HepG2 (cell line): ENCODE measurements at regions of chr17 and their contacts with region 1.

Region 1: DNA sequence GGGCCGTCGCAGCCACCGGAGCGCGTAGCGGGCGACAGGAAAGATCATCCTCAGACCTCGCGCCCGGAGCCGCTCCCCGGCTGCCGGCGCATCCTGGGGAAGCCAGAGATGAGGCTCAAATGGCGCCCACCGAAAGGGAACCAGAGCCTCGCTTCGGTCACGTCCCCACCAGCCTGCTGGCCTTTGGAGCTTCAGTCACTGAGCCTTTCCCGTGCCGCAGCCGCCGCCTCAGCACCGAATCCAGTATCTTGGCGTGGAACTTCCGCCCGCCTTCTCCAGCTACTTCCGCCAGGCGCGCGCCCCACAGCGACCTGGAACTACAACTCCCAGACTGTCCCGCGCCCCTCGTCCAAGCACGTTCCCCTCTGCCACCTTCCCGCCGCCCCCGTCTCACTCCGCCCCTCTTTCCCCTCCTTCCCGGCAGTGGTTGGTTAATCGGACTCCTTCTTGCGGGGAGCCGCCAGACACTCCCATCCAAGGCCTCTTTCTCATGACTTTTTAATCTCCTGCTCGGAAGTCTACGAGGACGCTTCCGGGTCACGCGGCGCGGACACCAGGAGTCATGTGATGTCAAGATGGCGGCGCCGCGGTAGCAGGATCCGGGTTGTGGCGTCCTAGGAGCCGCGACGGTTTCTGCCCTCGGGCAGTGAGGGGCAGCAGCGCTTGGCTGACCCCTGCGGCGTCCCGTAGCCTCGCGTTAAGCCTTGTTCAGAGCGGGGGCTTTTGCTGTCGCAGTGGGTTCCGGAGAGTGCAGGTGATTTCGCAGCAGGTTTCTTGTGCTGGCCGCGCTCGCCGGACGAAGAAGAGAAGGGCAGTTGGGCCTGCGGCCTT is at the starts of genes SMCR8 and TOP3A:
- DNase-seq: peak; percentile 92
- ATAC-seq: peak; percentile 94
- H3K4me3 ChIP-seq: peak within 1 kb of the TSS; percentile 71 to 91 (median 80)
- H3K27ac ChIP-seq: peak within 1 kb of the TSS; percentile 88
- H3K4me1 ChIP-seq: peaks cover 64% of the 10 kb centered on the region
- H3K27me3 ChIP-seq: no peaks in the 10 kb centered on the region; a peak in 1 of 5 replicates
- CTCF ChIP-seq: no peak
- EP300 ChIP-seq: no peak
- POLR2A ChIP-seq: peak; percentile 67 to 90
- RAD21 ChIP-seq: peak; percentile 54
- total RNA-seq, gene SMCR8: 11.8 and 16.6 TPM in 2 replicates
- total RNA-seq, gene TOP3A: 30.7 and 36.8 TPM in 2 replicates

Region 2: DNA sequence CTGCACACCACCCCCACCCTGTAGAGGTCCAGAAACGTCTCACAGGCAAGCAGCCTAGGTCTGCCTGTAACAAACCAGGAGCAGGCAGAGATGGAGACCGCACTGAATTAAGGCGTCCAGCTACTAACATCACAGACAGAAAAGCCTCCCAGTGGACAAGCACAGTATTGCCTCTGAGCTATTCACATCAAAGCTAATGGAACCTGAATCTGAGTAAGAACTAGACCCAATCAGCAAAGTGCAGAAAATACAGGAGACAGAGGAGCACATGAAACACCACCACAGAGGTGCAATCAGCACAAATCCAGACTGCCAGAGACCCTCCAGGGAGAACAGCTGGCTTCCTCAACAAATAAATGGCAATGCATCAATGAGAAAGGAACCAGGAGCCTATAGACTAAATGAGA is 701.2 kb before region 1 on chr17:
- CTCF ChIA-PET with region 1: no interaction called
- POLR2A ChIA-PET with region 1: no interaction called
- in situ Hi-C with region 1: no loop called
- intact Hi-C with region 1: no loop called
- DNase-seq: peak; percentile 63
- ATAC-seq: peak; percentile 93
- H3K4me3 ChIP-seq: no peak overlapping the region
- H3K27ac ChIP-seq: no peak overlapping the region
- H3K4me1 ChIP-seq: peaks cover 18% of the 10 kb centered on the region
- H3K27me3 ChIP-seq: no peaks in the 10 kb centered on the region
- CTCF ChIP-seq: peak; percentile 79
- EP300 ChIP-seq: no peak
- POLR2A ChIP-seq: no peak
- RAD21 ChIP-seq: peak; percentile 51

Region 3: GRCh38 chr17:18257982-18258355 is 57.0 kb before region 1 on chr17:
- CTCF ChIA-PET with region 1: no interaction called
- POLR2A ChIA-PET with region 1: interaction called, 5 read pairs
- in situ Hi-C with region 1: no loop called
- intact Hi-C with region 1: loop called (anchors 5 kb)
- DNase-seq: peak; percentile 53
- ATAC-seq: peak; percentile 70
- H3K4me3 ChIP-seq: peak overlapping the region; percentile 67 to 95 (median 87)
- H3K27ac ChIP-seq: peak overlapping the region; percentile 82
- H3K4me1 ChIP-seq: peaks cover 34% of the 10 kb centered on the region
- H3K27me3 ChIP-seq: no peaks in the 10 kb centered on the region; a peak in 1 of 5 replicates
- CTCF ChIP-seq: peak; percentile 36
- EP300 ChIP-seq: no peak
- POLR2A ChIP-seq: peak in 1 of 2 experiments; percentile 27; a peak in 1 of 4 replicates
- RAD21 ChIP-seq: no peak

Region 4: GRCh38 chr17:18363101-18364049 is 48.4 kb after region 1 on chr17 and contains the start of gene SHMT1:
- CTCF ChIA-PET with region 1: no interaction called
- POLR2A ChIA-PET with region 1: interaction called, 10 read pairs
- in situ Hi-C with region 1: no loop called
- intact Hi-C with region 1: loop called (anchors 10 kb)
- DNase-seq: peak; percentile 90
- ATAC-seq: peak; percentile 99
- H3K4me3 ChIP-seq: peak within 1 kb of the TSS; percentile 83 to 98 (median 93)
- H3K27ac ChIP-seq: peak within 1 kb of the TSS; percentile 71
- H3K4me1 ChIP-seq: peaks cover 20% of the 10 kb centered on the region
- H3K27me3 ChIP-seq: no peaks in the 10 kb centered on the region; a peak in 1 of 5 replicates
- CTCF ChIP-seq: no peak
- EP300 ChIP-seq: no peak
- POLR2A ChIP-seq: peak; percentile 62 to 87
- RAD21 ChIP-seq: no peak
- total RNA-seq, gene SHMT1: 48.8 and 58.7 TPM in 2 replicates